Left cardiac atrium (tissue), 4 donors: ENCODE measurements at regions of chr1 and their contacts with region 1.

Region 1: GRCh38 chr1:65992165-65992840 is 199.6 kb downstream of the PDE4B start:
- DNase-seq: no peak
- ATAC-seq: no peak

Region 2: GRCh38 chr1:66090859-66091457 is 98.7 kb after region 1 on chr1:
- intact Hi-C with region 1: loop called in 1 of 2 experiments (anchors 10 kb)
- DNase-seq: no peak
- ATAC-seq: no peak